ENCODE measurements at regions of chr3 and their contacts with region 1.

Region 1: GRCh38 chr3:133049491-133049890 is 11.3 kb downstream of the TMEM108 start:
- DNase-seq: no peak
- H3K4me3 ChIP-seq: no peak overlapping the region
- H3K27ac ChIP-seq: no peak overlapping the region
- H3K4me1 ChIP-seq: no peaks in the 10 kb centered on the region
- H3K27me3 ChIP-seq: peaks cover 0 to 1% of the 10 kb centered on the region in 2 experiments
- CTCF ChIP-seq: no peak
- POLR2A ChIP-seq: no peak

Region 2: GRCh38 chr3:133211449-133211848 is 162.0 kb after region 1 on chr3:
- CTCF ChIA-PET with region 1: no interaction called
- POLR2A ChIA-PET with region 1: no interaction called
- dilution Hi-C with region 1: no loop called
- intact Hi-C with region 1: loop called (anchors 5 kb)
- DNase-seq: no peak
- H3K4me3 ChIP-seq: no peak overlapping the region
- H3K27ac ChIP-seq: no peak overlapping the region
- H3K4me1 ChIP-seq: no peaks in the 10 kb centered on the region
- H3K27me3 ChIP-seq: peaks cover 0 to 2% of the 10 kb centered on the region in 2 experiments
- CTCF ChIP-seq: no peak
- POLR2A ChIP-seq: no peak